Mammary epithelial cell (primary cell): ENCODE measurements at regions of chr19 and their contacts with region 1.

Region 1: DNA sequence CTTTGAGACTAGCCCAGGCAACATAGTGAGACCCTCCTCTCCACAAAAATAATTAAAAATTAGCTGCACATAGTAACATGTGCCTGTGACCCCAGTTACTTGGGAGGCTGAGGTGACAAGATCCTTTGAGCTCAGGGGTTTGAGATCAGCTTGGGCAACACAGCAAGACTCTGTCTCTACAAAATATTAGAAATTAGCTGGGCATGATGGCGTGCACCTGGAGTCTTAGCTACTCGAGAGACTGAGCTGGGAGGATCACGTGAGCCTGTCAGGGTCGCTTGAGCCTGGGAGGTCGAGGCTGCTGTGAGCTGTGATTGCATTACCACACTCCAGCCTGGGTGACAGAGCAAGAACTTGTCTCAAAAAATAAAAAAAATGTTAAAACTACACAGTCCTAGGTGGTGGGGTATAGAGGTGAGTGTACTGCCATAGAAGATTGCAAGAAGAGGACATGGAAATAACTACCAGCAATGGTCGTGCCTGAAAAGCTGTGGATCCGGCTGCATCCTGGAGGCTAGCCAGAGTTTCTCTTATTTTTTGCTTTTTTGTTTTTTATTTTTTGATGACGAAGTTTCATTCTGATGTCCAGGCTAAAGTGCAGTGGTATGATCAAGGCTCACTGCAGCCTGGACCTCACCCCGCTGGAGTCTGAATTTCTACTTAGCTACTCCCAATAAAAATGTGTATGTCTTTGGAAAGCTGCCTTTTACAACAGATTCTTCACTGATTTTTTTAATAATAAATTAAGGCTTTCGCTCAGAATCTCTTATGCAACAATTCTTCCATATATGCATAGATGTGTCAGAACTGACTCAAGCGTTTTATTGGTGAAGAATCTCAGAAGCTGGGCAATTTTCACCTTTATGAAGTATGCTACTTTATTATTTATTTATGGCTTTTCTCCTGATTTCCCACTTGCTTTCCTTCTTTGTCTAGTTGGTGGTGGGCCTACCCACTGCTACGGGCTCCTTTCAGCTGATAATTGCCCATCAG is 393.8 kb downstream of the TSHZ3 start:
- DNase-seq: no peak
- H3K4me3 ChIP-seq: no peak overlapping the region
- H3K27ac ChIP-seq: no peak overlapping the region
- H3K4me1 ChIP-seq: no peaks in the 10 kb centered on the region
- H3K27me3 ChIP-seq: no peaks in the 10 kb centered on the region
- CTCF ChIP-seq: no peak

Region 2: DNA sequence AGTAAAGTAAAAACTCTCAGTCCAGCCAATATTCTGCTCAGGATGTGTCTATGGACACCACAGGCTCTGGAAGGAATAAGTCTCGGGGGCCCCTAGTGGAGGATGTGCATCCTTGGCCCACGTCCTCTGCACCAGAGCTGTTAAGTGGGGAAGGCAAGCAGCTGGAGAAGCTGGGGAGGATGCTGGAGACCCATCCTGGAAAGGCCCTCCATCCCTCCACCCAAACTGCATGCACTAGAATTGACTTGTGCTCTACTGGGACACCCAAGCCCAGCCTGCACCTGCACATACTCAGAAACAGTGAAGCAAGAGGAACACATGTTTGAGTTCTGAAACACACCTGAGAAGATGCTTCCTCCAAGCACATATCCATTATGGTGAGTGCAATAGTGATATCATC is 86.1 kb after region 1 on chr19:
- CTCF ChIA-PET with region 1: no interaction called
- dilution Hi-C with region 1: loop called (anchors 5 kb)
- in situ Hi-C with region 1: no loop called
- intact Hi-C with region 1: no loop called
- DNase-seq: no peak
- H3K4me3 ChIP-seq: no peak overlapping the region
- H3K27ac ChIP-seq: no peak overlapping the region
- H3K4me1 ChIP-seq: no peaks in the 10 kb centered on the region
- H3K27me3 ChIP-seq: no peaks in the 10 kb centered on the region
- CTCF ChIP-seq: no peak

Region 3: DNA sequence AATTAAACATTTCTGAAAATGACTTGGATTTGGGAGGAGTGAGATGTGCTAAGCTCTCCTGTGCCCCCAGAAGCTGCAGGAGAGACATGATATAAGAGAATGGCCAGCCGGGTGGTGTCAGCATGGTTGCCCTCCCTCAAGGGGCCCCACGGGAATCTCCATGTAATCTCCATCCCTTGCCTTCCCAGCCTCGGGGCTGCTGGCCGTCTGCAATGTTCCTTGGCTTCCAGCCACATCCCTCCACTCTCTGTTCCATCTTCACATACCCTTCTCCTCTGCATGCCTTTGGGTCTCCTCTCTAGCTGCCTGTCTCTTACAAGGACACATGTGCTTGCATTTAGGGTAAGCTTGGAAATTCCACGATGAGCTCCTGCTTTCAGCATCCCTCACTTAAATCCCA is 221.8 kb after region 1 on chr19:
- CTCF ChIA-PET with region 1: no interaction called
- dilution Hi-C with region 1: no loop called
- in situ Hi-C with region 1: no loop called
- intact Hi-C with region 1: no loop called
- DNase-seq: no peak
- H3K4me3 ChIP-seq: no peak overlapping the region
- H3K27ac ChIP-seq: no peak overlapping the region
- H3K4me1 ChIP-seq: no peaks in the 10 kb centered on the region
- H3K27me3 ChIP-seq: no peaks in the 10 kb centered on the region
- CTCF ChIP-seq: no peak